ENCODE measurements at regions of chr6 and their contacts with region 1.

Region 1: DNA sequence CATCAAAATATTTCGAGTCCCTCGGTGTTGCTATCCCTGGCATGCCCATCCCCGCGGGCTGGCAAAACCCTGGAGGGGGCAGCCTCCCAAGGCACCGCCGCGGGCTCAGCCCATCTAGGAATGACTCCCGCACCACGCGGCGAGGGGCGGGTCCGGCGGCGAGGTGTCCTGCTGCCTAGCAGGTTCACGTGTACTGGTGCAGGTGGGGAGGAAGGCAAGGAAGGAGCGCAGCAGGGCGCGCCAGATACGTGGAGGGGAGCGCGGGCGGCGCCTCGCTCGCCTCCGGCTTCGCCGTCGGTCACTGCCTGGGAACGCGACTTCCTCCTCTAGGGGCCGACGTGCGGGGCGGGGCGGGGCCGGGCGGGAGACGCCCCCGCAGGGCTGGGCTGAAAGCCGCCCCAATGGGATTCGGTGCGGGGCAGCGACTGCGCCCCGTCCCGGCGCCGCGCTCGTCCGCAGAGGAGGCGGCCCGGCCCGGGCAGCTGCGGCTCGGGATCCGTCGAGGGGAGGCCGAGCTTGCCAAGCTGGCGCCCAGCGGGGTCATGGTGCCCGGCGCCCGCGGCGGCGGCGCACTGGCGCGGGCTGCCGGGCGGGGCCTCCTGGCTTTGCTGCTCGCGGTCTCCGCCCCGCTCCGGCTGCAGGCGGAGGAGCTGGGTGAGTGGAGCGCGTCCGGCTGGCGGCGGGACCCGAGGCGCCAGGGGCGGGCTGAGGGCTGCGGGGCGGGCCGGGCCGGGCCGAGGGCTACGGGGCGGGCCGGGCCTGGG is at the start of gene DCBLD1:
- DNase-seq: peak in 1 of 2 experiments; percentile 80
- H3K4me3 ChIP-seq: peak within 1 kb of the TSS; percentile 60 to 96 (median 71)
- H3K27ac ChIP-seq: no peak within 1 kb of the TSS
- H3K4me1 ChIP-seq: peaks cover 7 to 10% (median 8%) of the 10 kb centered on the region in 4 experiments
- H3K27me3 ChIP-seq: peaks cover 0 to 27% (median 20%) of the 10 kb centered on the region in 4 experiments; a peak in 6 of 7 replicates
- CTCF ChIP-seq: no peak
- EP300 ChIP-seq: no peak
- POLR2A ChIP-seq: peak in 1 of 2 experiments; percentile 53; a peak in 2 of 3 replicates
- RAD21 ChIP-seq: no peak
- total RNA-seq, gene DCBLD1: 7.9 and 11.2 TPM in 2 replicates

Region 2: DNA sequence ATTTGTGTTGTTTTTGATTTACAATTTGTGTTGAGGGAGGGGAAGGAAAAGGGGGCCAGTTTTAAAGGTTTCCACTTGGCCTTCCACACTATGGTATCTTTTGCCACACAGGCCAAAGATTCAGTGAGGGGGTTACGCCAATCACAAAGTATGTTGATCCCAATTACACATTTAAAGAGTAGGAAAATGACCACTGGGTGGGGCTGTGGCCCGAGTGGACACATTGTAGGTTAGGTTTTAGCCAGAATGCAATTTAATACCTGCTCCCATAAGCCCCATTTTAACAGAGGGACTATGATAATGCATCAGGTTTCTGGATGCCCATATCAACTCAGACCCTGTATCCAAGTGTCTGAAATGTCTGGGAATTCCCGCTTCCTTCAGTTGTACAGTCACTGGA is 201.5 kb before region 1 on chr6:
- CTCF ChIA-PET with region 1: no interaction called
- POLR2A ChIA-PET with region 1: no interaction called
- DNase-seq: peak in 1 of 2 experiments; percentile 56
- H3K4me3 ChIP-seq: no peak overlapping the region
- H3K27ac ChIP-seq: no peak overlapping the region
- H3K4me1 ChIP-seq: no peaks in the 10 kb centered on the region
- H3K27me3 ChIP-seq: peaks cover 0 to 1% (median 0%) of the 10 kb centered on the region in 4 experiments; a peak in 2 of 7 replicates
- CTCF ChIP-seq: peak in 2 of 3 experiments; percentile 34 to 54; a peak in 2 of 4 replicates
- EP300 ChIP-seq: no peak
- POLR2A ChIP-seq: no peak
- RAD21 ChIP-seq: peak; percentile 38 to 39; a peak in 3 of 4 replicates

Region 3: DNA sequence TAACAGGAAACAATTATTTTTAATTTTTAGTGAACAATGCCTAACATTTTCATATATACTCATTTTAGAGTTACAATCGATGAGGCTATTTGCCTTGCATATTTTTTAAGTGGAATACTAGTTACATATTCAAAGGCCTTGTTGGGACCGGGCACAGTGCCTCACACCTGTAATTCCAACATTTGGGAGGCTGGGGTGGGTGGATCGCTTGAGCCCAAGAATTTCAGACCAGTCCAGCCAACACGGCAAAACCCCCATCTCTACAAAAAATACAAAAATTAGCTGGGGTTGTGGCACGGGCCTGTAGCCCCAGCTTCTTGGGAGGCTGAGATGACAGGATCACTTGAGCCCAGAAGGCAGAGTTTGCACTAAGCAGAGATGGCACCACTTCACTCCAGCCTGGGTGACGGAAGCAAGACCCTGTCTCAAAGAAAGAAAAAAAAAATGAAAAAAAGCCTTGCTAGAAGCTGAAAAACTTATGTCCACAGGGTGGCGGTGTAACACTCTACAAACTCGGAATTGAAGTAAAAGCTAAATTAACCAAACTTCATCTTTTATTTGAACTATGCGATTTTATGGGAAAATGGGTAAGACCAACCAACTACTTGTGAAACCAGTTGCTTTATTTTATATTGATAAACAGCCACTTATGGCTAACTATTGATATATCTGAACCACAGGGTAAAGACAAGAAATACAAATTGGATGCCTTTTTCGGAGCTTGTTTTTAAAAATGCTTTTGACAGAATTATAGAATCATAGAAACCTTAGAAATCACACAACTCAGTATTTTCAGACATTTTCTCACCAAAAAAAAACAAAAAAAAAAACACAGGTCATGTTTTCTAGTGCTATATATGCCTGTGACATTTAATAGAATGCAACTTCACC is 32.6 kb before region 1 on chr6:
- CTCF ChIA-PET with region 1: interaction called, 22 read pairs
- POLR2A ChIA-PET with region 1: no interaction called
- DNase-seq: peak in 1 of 2 experiments; percentile 56
- H3K4me3 ChIP-seq: no peak overlapping the region
- H3K27ac ChIP-seq: no peak overlapping the region
- H3K4me1 ChIP-seq: peaks cover 0 to 7% (median 3%) of the 10 kb centered on the region in 4 experiments; a peak in 4 of 7 replicates
- H3K27me3 ChIP-seq: no peaks in the 10 kb centered on the region
- CTCF ChIP-seq: peak in 2 of 3 experiments; percentile 52 to 69; a peak in 2 of 4 replicates
- EP300 ChIP-seq: no peak
- POLR2A ChIP-seq: no peak
- RAD21 ChIP-seq: peak; percentile 78 to 81

Region 4: GRCh38 chr6:117469356-117469755 is 13.1 kb before region 1 on chr6:
- CTCF ChIA-PET with region 1: interaction called, 16 read pairs
- POLR2A ChIA-PET with region 1: no interaction called
- DNase-seq: no peak
- H3K4me3 ChIP-seq: no peak overlapping the region
- H3K27ac ChIP-seq: no peak overlapping the region
- H3K4me1 ChIP-seq: no peaks in the 10 kb centered on the region
- H3K27me3 ChIP-seq: no peaks in the 10 kb centered on the region
- CTCF ChIP-seq: no peak
- EP300 ChIP-seq: no peak
- POLR2A ChIP-seq: no peak
- RAD21 ChIP-seq: no peak

Region 5: GRCh38 chr6:117501722-117502121 is 19.3 kb after region 1 on chr6:
- CTCF ChIA-PET with region 1: no interaction called
- POLR2A ChIA-PET with region 1: no interaction called
- DNase-seq: no peak
- H3K4me3 ChIP-seq: no peak overlapping the region
- H3K27ac ChIP-seq: no peak overlapping the region
- H3K4me1 ChIP-seq: no peaks in the 10 kb centered on the region
- H3K27me3 ChIP-seq: no peaks in the 10 kb centered on the region
- CTCF ChIP-seq: no peak
- EP300 ChIP-seq: no peak
- POLR2A ChIP-seq: no peak
- RAD21 ChIP-seq: no peak

Region 6: GRCh38 chr6:117547688-117548621 is 65.5 kb after region 1 on chr6:
- CTCF ChIA-PET with region 1: interaction called, 58 read pairs
- POLR2A ChIA-PET with region 1: interaction called, 3 read pairs
- DNase-seq: no peak
- H3K4me3 ChIP-seq: peak overlapping the region; percentile 14 to 55 (median 20); a peak in 7 of 8 replicates
- H3K27ac ChIP-seq: no peak overlapping the region
- H3K4me1 ChIP-seq: peaks cover 0 to 6% (median 3%) of the 10 kb centered on the region in 4 experiments; a peak in 5 of 7 replicates
- H3K27me3 ChIP-seq: no peaks in the 10 kb centered on the region; a peak in 1 of 7 replicates
- CTCF ChIP-seq: peak in 1 of 3 experiments; percentile 22; a peak in 2 of 4 replicates
- EP300 ChIP-seq: no peak
- POLR2A ChIP-seq: no peak
- RAD21 ChIP-seq: peak in 1 of 2 experiments; percentile 13; a peak in 1 of 4 replicates

Region 7: GRCh38 chr6:117555882-117556498 is 73.6 kb after region 1 on chr6:
- CTCF ChIA-PET with region 1: interaction called, 58 read pairs
- POLR2A ChIA-PET with region 1: no interaction called
- DNase-seq: peak in 1 of 2 experiments; percentile 74
- H3K4me3 ChIP-seq: no peak overlapping the region
- H3K27ac ChIP-seq: no peak overlapping the region
- H3K4me1 ChIP-seq: no peaks in the 10 kb centered on the region
- H3K27me3 ChIP-seq: no peaks in the 10 kb centered on the region
- CTCF ChIP-seq: peak in 2 of 3 experiments; percentile 44 to 63; a peak in 3 of 4 replicates
- EP300 ChIP-seq: no peak
- POLR2A ChIP-seq: no peak
- RAD21 ChIP-seq: peak; percentile 48 to 59

Region 8: DNA sequence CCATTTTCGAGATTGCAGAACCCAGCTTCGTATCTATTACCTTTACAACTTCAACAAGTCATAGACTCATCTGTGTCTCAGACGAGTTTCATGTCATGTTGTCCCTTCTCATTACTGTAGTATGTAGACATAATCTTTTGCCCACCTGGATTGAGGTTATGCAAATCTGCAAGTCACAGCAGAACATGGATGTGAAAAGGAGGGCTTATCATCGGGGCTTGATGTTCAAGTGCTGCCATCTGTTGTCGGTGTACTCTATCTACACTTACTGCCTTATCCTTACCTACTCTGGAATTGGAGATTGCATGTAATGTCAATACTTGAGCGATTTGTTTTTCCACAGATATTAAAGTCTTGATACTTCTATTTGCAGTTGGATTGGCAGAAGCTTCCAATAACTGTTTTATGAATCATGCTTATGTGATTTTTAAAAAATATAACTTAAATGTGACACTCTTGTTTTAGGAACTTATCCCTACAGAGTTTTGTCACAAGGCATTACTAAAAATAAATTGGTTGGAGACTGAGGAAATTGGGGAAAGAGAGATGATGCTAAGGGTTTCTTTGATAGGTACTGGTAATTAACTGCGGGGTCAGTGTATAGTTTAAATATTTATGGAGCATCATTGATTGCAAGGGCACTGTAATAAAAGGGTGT is 122.9 kb after region 1 on chr6:
- CTCF ChIA-PET with region 1: interaction called, 38 read pairs
- POLR2A ChIA-PET with region 1: interaction called, 6 read pairs
- DNase-seq: no peak
- H3K4me3 ChIP-seq: no peak overlapping the region
- H3K27ac ChIP-seq: no peak overlapping the region
- H3K4me1 ChIP-seq: no peaks in the 10 kb centered on the region
- H3K27me3 ChIP-seq: no peaks in the 10 kb centered on the region
- CTCF ChIP-seq: peak in 2 of 3 experiments; percentile 72 to 82; a peak in 3 of 4 replicates
- EP300 ChIP-seq: no peak
- POLR2A ChIP-seq: no peak
- RAD21 ChIP-seq: peak; percentile 80 to 81

Region 9: DNA sequence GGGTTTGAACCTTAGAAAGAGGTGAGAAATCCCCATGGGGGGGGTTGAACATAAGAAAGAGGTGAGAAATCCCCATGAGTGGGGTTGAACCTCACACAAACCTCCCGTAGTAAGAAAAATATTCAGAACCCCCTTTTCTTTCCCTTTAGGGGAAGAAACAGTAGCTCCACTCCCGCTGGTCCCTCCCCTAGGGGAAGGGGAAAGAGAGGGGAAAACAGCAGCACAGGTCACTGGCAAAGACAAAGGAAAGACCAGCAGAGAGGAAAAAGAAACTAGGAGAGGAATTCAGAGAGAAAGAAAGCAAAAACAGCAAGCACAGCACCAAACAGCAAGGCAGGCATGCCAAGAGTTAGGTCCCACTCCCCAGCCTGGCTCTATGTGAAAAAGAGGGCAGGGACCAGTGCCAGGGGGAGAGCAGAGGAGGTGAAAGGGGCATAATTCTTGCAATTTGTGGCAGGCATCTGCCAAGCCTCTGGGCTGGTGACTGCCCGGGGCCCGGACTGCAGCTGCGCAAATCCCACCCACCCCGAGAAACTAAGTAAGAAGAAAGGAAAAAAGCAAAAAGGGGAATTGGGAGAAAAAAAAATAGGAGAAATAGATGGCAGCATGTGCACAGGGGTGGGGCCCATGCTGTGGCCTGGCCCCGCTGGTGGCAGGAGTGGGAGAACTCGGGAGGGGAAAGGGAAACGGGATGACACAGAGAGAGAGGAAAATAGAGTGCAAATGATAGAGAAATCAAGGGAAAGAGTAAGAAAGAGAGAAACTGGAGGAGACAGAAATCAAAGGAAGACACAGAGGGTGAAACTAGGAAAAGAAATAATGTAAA is 135.0 kb after region 1 on chr6:
- CTCF ChIA-PET with region 1: no interaction called
- POLR2A ChIA-PET with region 1: no interaction called
- DNase-seq: peak in 1 of 2 experiments; percentile 52
- H3K4me3 ChIP-seq: peak overlapping the region in 1 of 4 experiments; percentile 5; a peak in 1 of 8 replicates
- H3K27ac ChIP-seq: 0 out of 2 replicates have a peak overlapping the region, but pooled peaks have one; percentile 3
- H3K4me1 ChIP-seq: peaks cover 0 to 24% (median 7%) of the 10 kb centered on the region in 4 experiments; a peak in 6 of 7 replicates
- H3K27me3 ChIP-seq: no peaks in the 10 kb centered on the region
- CTCF ChIP-seq: no peak
- EP300 ChIP-seq: no peak
- POLR2A ChIP-seq: no peak
- RAD21 ChIP-seq: no peak